ENCODE measurements at regions of chr4 and their contacts with region 1.

Region 1: DNA sequence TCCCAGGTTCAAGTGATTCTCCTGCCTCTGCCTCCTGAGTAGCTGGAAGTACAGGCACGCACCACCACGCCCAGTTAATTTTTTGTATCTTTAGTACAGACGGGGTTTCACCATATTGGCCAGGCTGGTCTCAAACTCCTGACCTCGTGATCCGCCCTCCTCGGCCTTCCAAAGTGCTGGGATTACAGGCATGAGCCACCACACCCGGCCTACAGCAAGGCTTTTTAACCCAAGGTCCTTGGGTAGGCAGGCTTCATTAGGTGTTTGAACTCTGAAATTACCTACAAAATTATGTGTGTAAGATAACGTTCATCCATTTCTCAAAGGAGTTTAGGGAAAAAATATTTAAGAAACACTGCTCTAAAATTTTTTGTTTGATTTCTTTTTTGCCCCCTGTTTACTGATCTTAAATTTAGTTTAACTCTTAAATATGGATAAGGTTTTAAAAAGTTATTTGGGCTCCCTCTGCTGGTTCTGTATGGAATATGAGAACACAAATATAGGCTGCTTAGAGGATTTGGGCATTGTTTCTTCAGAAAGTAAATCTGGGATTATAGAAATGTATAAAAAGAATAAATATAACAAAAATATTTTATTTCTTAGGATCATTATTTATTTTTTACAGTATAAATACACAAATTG is 92.8 kb downstream of the CBR4 start:
- DNase-seq: peak; percentile 22
- ATAC-seq: peak; percentile 68
- H3K4me3 ChIP-seq: no peak overlapping the region
- H3K27ac ChIP-seq: peak overlapping the region; percentile 25; the same call in 1 of the 2 replicates
- H3K4me1 ChIP-seq: peaks cover 0 to 6% of the 10 kb centered on the region in 2 experiments; a peak in 2 of 4 replicates
- H3K27me3 ChIP-seq: no peaks in the 10 kb centered on the region
- CTCF ChIP-seq: peak; percentile 44 to 56 (median 54); a peak in 5 of 6 replicates
- POLR2A ChIP-seq: no peak
- RAD21 ChIP-seq: peak; percentile 76

Region 2: GRCh38 chr4:168514249-168514852 is 402.9 kb before region 1 on chr4:
- CTCF ChIA-PET with region 1: interaction called, 3 read pairs
- POLR2A ChIA-PET with region 1: no interaction called
- RAD21 ChIA-PET with region 1: no interaction called
- intact Hi-C with region 1: loop called (anchors 5 kb)
- DNase-seq: no peak
- ATAC-seq: no peak
- H3K4me3 ChIP-seq: no peak overlapping the region
- H3K27ac ChIP-seq: peak overlapping the region; percentile 57; the same call in 1 of the 2 replicates
- H3K4me1 ChIP-seq: peaks cover 47 to 82% of the 10 kb centered on the region in 2 experiments
- H3K27me3 ChIP-seq: no peaks in the 10 kb centered on the region
- CTCF ChIP-seq: peak; percentile 22 to 45 (median 35); a peak in 1 of 6 replicates
- POLR2A ChIP-seq: no peak
- RAD21 ChIP-seq: peak; percentile 60